Tibial artery (tissue), 4 donors: ENCODE measurements at regions of chr22 and their contacts with region 1.

Region 1: DNA sequence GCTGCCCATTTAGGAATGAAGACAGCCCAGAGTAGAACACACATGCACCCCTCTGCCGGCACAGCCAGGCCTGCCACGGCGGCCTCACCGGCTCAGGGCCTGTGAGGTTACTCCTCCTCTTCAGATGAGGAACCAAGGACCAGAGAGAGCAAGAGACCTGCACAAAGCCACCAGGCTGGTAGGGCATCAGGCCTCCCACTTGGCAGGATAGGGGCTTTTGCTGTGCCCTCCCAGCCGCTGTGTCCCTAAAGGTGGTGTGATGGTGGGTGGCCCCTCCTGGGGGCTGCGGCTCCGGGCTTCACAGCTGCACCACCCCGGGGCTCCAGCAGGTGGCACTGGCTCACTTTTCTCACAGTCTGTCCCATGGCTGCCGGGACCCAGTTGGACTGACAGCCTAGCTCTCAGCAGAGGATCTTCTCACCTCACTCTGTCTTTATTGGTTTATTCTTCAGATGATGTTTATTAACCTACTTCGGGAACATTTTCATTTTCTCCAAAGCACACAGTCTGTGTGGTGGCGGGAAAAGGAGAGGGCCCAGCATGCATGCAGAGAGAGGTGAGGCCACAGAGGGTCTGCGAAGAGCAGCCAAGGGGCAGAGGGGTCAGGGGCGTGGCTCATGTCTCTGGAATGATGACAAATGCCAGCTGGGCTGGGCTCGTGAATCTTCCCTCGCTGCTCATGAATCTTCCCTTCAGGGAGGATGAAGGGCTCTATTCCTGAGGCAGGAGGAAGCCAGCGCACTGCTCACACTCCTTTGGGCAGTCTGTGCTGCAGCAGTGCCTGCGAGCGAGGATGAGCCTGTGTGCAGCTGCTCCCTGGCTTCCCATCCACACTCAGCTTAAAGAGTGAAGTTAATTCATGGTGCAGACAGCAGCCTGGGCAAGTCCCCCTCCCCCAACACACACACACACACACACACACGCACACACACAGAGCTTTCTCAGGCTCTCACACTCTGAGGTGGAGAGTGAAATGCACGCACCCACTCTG is 101.1 kb upstream of the PITPNB start:
- DNase-seq: peak; percentile 75 to 77
- H3K4me3 ChIP-seq: no peak overlapping the region
- H3K27ac ChIP-seq: no peak overlapping the region
- H3K4me1 ChIP-seq: peaks cover 0 to 17% (median 5%) of the 10 kb centered on the region in 4 donors
- H3K27me3 ChIP-seq: no peaks in the 10 kb centered on the region
- CTCF ChIP-seq: peak; percentile 87 to 93

Region 2: GRCh38 chr22:27962268-27963044 is 57.7 kb before region 1 on chr22:
- intact Hi-C with region 1: no loop called
- DNase-seq: no peak
- H3K4me3 ChIP-seq: no peak overlapping the region
- H3K27ac ChIP-seq: peak overlapping the region in 1 of 2 donors; percentile 35
- H3K4me1 ChIP-seq: peaks cover 0 to 22% (median 3%) of the 10 kb centered on the region in 4 donors
- H3K27me3 ChIP-seq: no peaks in the 10 kb centered on the region
- CTCF ChIP-seq: no peak

Region 3: DNA sequence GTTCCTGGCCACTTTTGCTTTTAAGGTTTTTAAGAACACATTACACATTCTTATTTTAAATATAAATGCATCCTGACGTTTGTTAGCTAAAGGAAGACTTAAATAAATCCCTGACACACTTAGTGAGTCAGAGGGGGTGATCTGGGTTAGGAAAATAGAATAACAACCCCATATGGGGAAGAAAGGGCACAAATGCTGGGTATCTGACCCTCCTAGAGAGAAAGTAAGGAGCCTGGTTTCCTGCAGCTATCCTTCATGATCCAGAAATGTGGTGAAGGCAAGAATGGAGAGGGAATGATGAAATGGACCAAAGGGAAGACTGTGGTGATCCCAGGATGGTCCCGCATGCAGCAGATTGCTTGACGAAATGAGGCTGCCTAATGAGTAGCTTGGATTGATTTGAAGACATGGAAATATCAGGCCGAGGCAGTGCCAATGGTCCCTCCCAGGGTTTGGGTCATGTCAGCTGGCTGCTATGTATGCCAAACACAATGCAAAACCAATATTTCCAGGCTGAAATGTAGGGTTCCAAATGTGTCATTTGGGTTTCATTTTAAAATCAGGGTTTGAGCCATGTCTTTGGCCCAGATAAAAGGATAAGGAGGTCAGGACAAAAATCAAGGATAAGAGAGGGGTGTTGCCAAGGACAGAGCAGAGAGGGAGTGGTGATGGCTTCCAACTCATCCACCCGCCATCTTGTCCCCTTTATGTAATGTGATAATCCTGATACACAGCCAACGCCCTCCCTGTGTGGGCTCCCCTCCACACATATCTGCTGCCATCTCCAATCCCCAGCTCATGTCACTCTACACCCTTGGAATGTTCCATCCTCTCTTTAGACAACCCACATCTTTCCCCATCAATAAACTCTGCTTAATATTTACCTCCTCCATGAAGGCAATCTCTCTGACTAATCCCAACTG is 34.0 kb after region 1 on chr22:
- intact Hi-C with region 1: no loop called
- DNase-seq: no peak
- H3K4me3 ChIP-seq: no peak overlapping the region
- H3K27ac ChIP-seq: no peak overlapping the region
- H3K4me1 ChIP-seq: peaks cover 0 to 8% (median 0%) of the 10 kb centered on the region in 4 donors
- H3K27me3 ChIP-seq: no peaks in the 10 kb centered on the region
- CTCF ChIP-seq: no peak

Region 4: DNA sequence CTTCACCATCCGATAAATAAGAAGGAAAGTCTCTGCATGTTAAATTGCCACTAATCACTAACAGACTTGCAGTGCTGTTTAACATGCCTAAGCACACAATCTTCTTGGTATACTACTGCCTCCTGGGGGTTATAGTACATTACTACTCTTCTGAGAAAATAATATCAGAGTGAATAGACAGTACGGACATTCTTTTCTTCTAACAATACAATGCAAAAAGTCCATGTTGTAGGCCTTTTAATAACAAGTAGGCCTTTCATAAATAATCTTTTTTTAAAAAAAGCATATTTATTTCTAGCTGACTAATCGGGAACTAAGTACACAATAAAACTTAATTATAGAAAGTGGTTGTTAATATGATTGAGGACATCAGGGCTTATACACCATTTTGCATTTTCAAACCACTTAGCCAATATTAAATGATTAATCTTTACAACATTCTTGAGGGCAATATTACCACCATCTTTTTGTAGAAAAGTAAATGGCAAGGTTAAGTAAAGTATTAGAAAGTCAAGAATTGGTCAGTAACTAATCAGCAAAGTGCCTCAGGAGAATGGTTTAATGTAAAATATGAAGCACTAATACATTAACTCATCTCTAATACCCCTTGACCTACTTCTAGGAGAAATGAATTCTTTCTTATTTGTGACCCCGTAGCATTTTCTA is 574.8 kb after region 1 on chr22:
- intact Hi-C with region 1: loop called (anchors 1 kb)
- DNase-seq: no peak
- H3K4me3 ChIP-seq: no peak overlapping the region
- H3K27ac ChIP-seq: no peak overlapping the region
- H3K4me1 ChIP-seq: no peaks in the 10 kb centered on the region
- H3K27me3 ChIP-seq: no peaks in the 10 kb centered on the region
- CTCF ChIP-seq: peak; percentile 76 to 95

Region 5: DNA sequence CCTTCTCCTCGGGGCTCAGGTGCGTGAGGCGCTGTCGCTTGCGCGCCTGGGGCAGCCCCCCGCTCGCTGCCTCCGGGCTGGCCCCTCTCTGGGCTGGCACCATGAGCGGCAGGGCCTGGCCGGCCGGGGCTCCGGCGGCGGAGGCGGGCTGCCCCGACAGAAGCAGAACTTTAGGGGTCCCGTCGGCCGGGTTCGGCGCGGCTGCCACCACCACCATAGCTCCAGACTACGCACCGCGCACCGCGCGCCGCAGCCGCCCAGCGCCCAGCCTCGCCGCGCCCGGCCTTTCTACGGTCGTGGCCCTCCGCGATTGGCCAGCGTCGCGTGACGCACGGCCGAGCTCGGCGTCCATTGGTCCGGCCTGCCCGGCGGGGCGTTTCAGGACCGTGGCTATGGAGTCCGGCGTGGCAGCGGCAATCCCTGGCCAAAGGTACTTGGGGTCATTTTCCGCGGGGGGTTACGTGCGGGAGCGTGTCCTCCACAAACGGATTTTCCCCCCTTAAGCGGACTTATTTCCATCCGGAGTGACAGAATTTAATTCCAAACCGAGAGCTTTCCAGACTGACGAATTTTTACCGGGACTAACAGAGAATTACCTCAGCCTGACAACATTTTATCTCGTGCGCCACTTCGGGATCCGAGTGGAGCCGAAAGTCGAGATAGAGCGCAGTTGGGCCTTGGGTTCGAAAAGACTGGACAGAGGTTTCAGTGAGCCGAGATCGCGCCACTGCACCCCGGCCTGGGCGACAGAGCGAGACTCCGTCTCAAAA is 780.3 kb after region 1 on chr22 and contains the start of gene XBP1:
- intact Hi-C with region 1: no loop called
- DNase-seq: peak; percentile 93 to 97
- H3K4me3 ChIP-seq: peak within 1 kb of the TSS; percentile 87 to 90
- H3K27ac ChIP-seq: peak within 1 kb of the TSS; percentile 98 to 100
- H3K4me1 ChIP-seq: peaks cover 0 to 55% (median 44%) of the 10 kb centered on the region in 4 donors
- H3K27me3 ChIP-seq: no peaks in the 10 kb centered on the region
- CTCF ChIP-seq: no peak